GM12878 (cell line): ENCODE measurements at regions of chr18 and their contacts with region 1.

Region 1: GRCh38 chr18:29874519-29875098 is 1167.9 kb downstream of the DSC3 start:
- DNase-seq: no peak
- ATAC-seq: peak; percentile 75
- H3K4me3 ChIP-seq: no peak overlapping the region
- H3K27ac ChIP-seq: no peak overlapping the region
- H3K4me1 ChIP-seq: no peaks in the 10 kb centered on the region
- H3K27me3 ChIP-seq: no peaks in the 10 kb centered on the region; a peak in 1 of 4 replicates
- CTCF ChIP-seq: peak; percentile 42 to 66 (median 52); a peak in 5 of 6 replicates
- EP300 ChIP-seq: no peak
- POLR2A ChIP-seq: no peak
- RAD21 ChIP-seq: peak; percentile 66

Region 2: DNA sequence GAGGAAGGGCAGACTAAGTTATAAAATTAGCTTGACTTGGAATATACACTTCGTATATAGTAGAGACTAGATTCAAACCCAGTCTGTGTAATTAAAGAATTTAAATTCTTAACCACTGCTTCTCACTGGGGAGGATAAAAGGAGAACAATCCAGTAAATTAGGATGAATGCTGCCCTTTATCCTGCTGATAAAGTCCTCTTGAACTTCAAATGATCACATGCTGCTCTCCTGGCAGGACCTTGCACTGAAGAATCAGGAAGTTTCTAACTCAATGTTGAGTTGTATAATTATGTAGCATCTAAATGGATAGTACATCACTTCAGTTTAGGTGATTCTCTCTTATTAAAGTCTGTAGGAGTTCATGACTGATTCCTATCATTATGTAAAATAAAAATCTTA is 11.8 kb before region 1 on chr18:
- CTCF ChIA-PET with region 1: interaction called, 12 read pairs
- POLR2A ChIA-PET with region 1: no interaction called
- RAD21 ChIA-PET with region 1: no interaction called
- SMC1A ChIA-PET with region 1: interaction called, 5 read pairs
- in situ Hi-C with region 1: no loop called
- intact Hi-C with region 1: no loop called
- DNase-seq: no peak
- ATAC-seq: no peak
- H3K4me3 ChIP-seq: no peak overlapping the region
- H3K27ac ChIP-seq: no peak overlapping the region
- H3K4me1 ChIP-seq: no peaks in the 10 kb centered on the region
- H3K27me3 ChIP-seq: no peaks in the 10 kb centered on the region
- CTCF ChIP-seq: no peak
- EP300 ChIP-seq: no peak
- POLR2A ChIP-seq: no peak
- RAD21 ChIP-seq: no peak

Region 3: GRCh38 chr18:29912351-29912750 is 37.7 kb after region 1 on chr18:
- CTCF ChIA-PET with region 1: no interaction called
- POLR2A ChIA-PET with region 1: no interaction called
- RAD21 ChIA-PET with region 1: no interaction called
- SMC1A ChIA-PET with region 1: no interaction called
- in situ Hi-C with region 1: no loop called
- intact Hi-C with region 1: no loop called
- DNase-seq: no peak
- ATAC-seq: no peak
- H3K4me3 ChIP-seq: no peak overlapping the region
- H3K27ac ChIP-seq: no peak overlapping the region
- H3K4me1 ChIP-seq: no peaks in the 10 kb centered on the region
- H3K27me3 ChIP-seq: no peaks in the 10 kb centered on the region
- CTCF ChIP-seq: no peak
- EP300 ChIP-seq: no peak
- POLR2A ChIP-seq: no peak
- RAD21 ChIP-seq: no peak

Region 4: DNA sequence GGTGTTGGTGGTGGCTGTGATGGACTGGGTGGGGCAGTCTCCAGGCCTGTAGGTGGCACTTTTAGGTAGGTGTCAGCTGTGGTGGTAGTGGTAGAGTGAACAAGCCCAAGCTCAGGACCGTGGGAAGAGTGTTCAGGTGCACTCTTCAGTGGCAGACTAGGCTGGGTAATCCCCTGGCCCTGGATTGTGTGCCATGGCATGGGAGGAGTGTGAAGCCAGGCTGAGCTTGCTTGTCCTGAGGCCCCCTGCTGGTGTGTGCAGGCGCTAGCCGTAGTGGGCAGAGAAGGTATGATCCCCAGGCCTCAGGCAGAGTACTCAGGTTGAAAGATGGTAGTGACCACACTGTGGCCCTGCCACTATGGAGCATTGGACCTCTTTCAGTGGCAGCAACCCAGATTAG is 317.6 kb after region 1 on chr18:
- CTCF ChIA-PET with region 1: interaction called, 3 read pairs
- POLR2A ChIA-PET with region 1: no interaction called
- RAD21 ChIA-PET with region 1: no interaction called
- SMC1A ChIA-PET with region 1: no interaction called
- in situ Hi-C with region 1: no loop called
- intact Hi-C with region 1: loop called (anchors 10 kb)
- DNase-seq: no peak
- ATAC-seq: peak; percentile 89
- H3K4me3 ChIP-seq: no peak overlapping the region
- H3K27ac ChIP-seq: no peak overlapping the region
- H3K4me1 ChIP-seq: no peaks in the 10 kb centered on the region
- H3K27me3 ChIP-seq: no peaks in the 10 kb centered on the region
- CTCF ChIP-seq: peak in 1 of 3 experiments; percentile 36; a peak in 2 of 6 replicates
- EP300 ChIP-seq: no peak
- POLR2A ChIP-seq: no peak
- RAD21 ChIP-seq: no peak

Region 5: DNA sequence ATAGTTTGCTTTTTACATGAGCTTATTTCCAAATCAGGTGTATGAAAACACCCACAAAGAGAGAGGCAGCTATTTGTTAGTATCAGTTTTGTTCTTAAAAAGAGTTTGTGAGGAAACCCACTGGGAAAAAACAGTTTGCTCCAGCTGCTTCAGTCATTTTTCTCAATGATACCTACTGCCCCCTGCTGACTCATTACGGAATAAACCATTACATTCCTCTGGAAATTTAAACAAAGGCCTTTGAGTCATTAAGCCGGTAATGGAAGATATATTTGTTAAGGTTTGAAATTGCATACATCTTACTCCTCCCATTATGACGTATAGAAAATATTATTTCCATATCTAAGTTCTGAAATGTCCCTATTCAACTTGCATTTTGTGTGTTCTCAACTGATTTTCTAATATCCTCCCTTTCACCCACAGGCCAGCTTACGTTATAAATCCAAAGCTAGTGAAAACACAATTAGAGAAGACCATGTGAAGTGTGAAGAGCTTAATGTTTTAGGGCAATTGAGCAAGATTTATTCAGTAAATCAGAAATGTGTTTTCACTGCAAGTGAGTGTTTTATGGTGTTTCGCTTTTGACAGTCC is 406.4 kb after region 1 on chr18:
- CTCF ChIA-PET with region 1: interaction called, 74 read pairs
- POLR2A ChIA-PET with region 1: no interaction called
- RAD21 ChIA-PET with region 1: interaction called, 37 read pairs
- SMC1A ChIA-PET with region 1: interaction called, 37 read pairs
- in situ Hi-C with region 1: no loop called
- intact Hi-C with region 1: loop called (anchors 2 kb)
- DNase-seq: no peak
- ATAC-seq: no peak; the same call in 2 of the 3 replicates
- H3K4me3 ChIP-seq: no peak overlapping the region
- H3K27ac ChIP-seq: no peak overlapping the region
- H3K4me1 ChIP-seq: no peaks in the 10 kb centered on the region
- H3K27me3 ChIP-seq: no peaks in the 10 kb centered on the region
- CTCF ChIP-seq: peak; percentile 43 to 56 (median 45); a peak in 5 of 6 replicates
- EP300 ChIP-seq: no peak
- POLR2A ChIP-seq: no peak
- RAD21 ChIP-seq: peak; percentile 57

Region 6: GRCh38 chr18:30889519-30890301 is 1015.1 kb after region 1 on chr18:
- CTCF ChIA-PET with region 1: interaction called, 13 read pairs
- POLR2A ChIA-PET with region 1: no interaction called
- RAD21 ChIA-PET with region 1: interaction called, 17 read pairs
- SMC1A ChIA-PET with region 1: interaction called, 24 read pairs
- in situ Hi-C with region 1: no loop called
- intact Hi-C with region 1: loop called (anchors 10 kb)
- DNase-seq: no peak
- ATAC-seq: no peak
- H3K4me3 ChIP-seq: no peak overlapping the region
- H3K27ac ChIP-seq: no peak overlapping the region
- H3K4me1 ChIP-seq: no peaks in the 10 kb centered on the region
- H3K27me3 ChIP-seq: peaks cover 0 to 1% of the 10 kb centered on the region in 2 experiments; a peak in 1 of 4 replicates
- CTCF ChIP-seq: peak in 2 of 3 experiments; percentile 12 to 51; a peak in 3 of 6 replicates
- EP300 ChIP-seq: no peak
- POLR2A ChIP-seq: no peak
- RAD21 ChIP-seq: peak; percentile 31; the same call in 1 of the 2 replicates

Region 7: GRCh38 chr18:30971338-30971956 is 1096.8 kb after region 1 on chr18:
- CTCF ChIA-PET with region 1: interaction called, 23 read pairs
- POLR2A ChIA-PET with region 1: no interaction called
- RAD21 ChIA-PET with region 1: interaction called, 9 read pairs
- SMC1A ChIA-PET with region 1: interaction called, 9 read pairs
- in situ Hi-C with region 1: no loop called
- intact Hi-C with region 1: loop called (anchors 2 kb)
- DNase-seq: no peak
- ATAC-seq: peak; percentile 80
- H3K4me3 ChIP-seq: no peak overlapping the region
- H3K27ac ChIP-seq: no peak overlapping the region
- H3K4me1 ChIP-seq: no peaks in the 10 kb centered on the region
- H3K27me3 ChIP-seq: no peaks in the 10 kb centered on the region; a peak in 1 of 4 replicates
- CTCF ChIP-seq: peak; percentile 21 to 49 (median 41); a peak in 4 of 6 replicates
- EP300 ChIP-seq: no peak
- POLR2A ChIP-seq: no peak
- RAD21 ChIP-seq: peak; percentile 34; the same call in 1 of the 2 replicates